Natural killer cell (primary cell): ENCODE measurements at regions of chr1 and their contacts with region 1.

Region 1: DNA sequence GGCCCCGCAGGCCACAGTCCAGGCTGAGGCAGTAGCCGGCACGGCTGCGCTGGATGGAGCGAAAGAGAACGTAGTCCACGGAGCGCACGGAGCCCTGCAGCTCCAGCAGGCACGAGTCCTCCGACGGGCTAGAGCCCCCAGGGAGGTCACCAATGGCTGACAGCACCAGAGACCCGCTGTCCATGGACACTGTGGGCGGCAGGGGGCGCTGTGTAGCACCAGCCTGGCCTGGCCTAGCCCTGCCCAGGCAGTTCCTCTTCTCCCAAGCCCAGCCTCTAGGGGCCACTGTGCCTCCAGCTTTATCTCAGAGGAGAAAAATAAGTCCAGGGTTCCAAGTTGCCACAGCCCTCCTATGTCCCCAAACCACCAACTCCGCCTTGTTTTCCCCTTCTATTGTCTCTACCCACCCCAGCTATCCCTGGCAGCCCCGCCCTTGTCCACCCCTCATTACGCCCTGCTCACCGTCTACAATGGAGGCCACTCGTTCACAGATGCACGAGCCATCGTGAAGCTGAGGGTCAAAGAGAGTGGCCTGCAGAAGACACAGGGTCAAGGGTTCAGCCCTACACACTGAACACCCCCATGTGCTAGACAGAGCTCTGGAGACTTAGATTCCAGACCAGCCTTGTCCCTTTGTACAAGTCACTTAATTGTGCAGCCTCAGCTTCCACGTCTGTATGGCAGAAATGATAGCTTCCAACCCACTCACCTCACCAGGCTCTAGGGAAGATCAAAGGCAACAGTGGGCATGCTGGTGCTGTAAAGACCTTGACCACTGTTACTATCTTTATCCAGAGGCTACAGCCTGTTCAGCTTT is 4.4 kb downstream of the ENTREP3 start:
- DNase-seq: peak; percentile 96 to 97
- ATAC-seq: peak; percentile 98 to 100 (median 98)
- H3K4me3 ChIP-seq: peak overlapping the region; percentile 46
- H3K4me3 Mint-ChIP-seq: peak overlapping the region; percentile 63
- H3K27ac ChIP-seq: no peak overlapping the region
- H3K27ac Mint-ChIP-seq: peak overlapping the region in 1 of 2 donors; percentile 58
- H3K4me1 ChIP-seq: peaks cover 31% of the 10 kb centered on the region
- H3K4me1 Mint-ChIP-seq: peaks cover 18 to 33% of the 10 kb centered on the region in 2 donors
- H3K27me3 ChIP-seq: no peaks in the 10 kb centered on the region
- H3K27me3 Mint-ChIP-seq: no peaks in the 10 kb centered on the region
- CTCF ChIP-seq: peak; percentile 100

Region 2: GRCh38 chr1:155273343-155274245 is 22.8 kb after region 1 on chr1 and contains the start of gene CLK2:
- intact Hi-C with region 1: loop called (anchors 2 kb)
- DNase-seq: peak; percentile 91 to 96
- ATAC-seq: peak; percentile 87 to 96 (median 89)
- H3K4me3 ChIP-seq: peak within 1 kb of the TSS; percentile 53
- H3K4me3 Mint-ChIP-seq: peak within 1 kb of the TSS; percentile 92
- H3K27ac ChIP-seq: peak within 1 kb of the TSS; percentile 71
- H3K27ac Mint-ChIP-seq: peak within 1 kb of the TSS; percentile 85 to 98
- H3K4me1 ChIP-seq: peaks cover 39% of the 10 kb centered on the region
- H3K4me1 Mint-ChIP-seq: peaks cover 46 to 48% of the 10 kb centered on the region in 2 donors
- H3K27me3 ChIP-seq: no peaks in the 10 kb centered on the region
- H3K27me3 Mint-ChIP-seq: no peaks in the 10 kb centered on the region
- CTCF ChIP-seq: no peak
- total RNA-seq, gene CLK2: 70.4 to 97.5 (median 84.4) TPM

Region 3: DNA sequence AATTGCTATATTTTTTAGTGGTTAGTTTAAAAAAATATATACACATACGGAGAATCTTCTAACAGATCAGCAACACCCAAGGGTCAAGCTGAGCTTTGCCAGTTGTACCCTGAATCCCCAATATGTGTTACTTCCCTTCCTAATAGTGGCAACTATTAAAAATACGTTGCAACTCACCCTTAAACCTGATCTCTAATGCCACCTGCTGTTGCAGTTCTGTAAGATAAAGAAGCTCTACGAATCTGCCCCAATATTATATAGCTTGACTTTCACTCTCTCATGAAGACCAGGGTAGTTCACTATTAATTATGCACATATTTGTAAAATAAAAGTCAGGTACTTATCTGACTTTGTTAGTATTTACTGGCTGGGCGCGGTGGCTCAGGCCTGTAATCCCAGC is 253.4 kb after region 1 on chr1:
- intact Hi-C with region 1: loop called (anchors 10 kb)
- DNase-seq: peak in 1 of 2 donors; percentile 57
- ATAC-seq: peak in 2 of 3 donors; percentile 40 to 63
- H3K4me3 ChIP-seq: no peak overlapping the region
- H3K4me3 Mint-ChIP-seq: no peak overlapping the region
- H3K27ac ChIP-seq: no peak overlapping the region
- H3K27ac Mint-ChIP-seq: peak overlapping the region in 1 of 2 donors; percentile 13
- H3K4me1 ChIP-seq: peaks cover 7% of the 10 kb centered on the region
- H3K4me1 Mint-ChIP-seq: peaks cover 29% of the 10 kb centered on the region in 2 donors
- H3K27me3 ChIP-seq: no peaks in the 10 kb centered on the region
- H3K27me3 Mint-ChIP-seq: no peaks in the 10 kb centered on the region
- CTCF ChIP-seq: no peak

Region 4: GRCh38 chr1:155591770-155592169 is 340.9 kb after region 1 on chr1:
- intact Hi-C with region 1: loop called (anchors 1 kb)
- DNase-seq: peak in 1 of 2 donors; percentile 80
- ATAC-seq: peak; percentile 68 to 83 (median 73)
- H3K4me3 ChIP-seq: no peak overlapping the region
- H3K4me3 Mint-ChIP-seq: no peak overlapping the region
- H3K27ac ChIP-seq: no peak overlapping the region
- H3K27ac Mint-ChIP-seq: no peak overlapping the region
- H3K4me1 ChIP-seq: no peaks in the 10 kb centered on the region
- H3K4me1 Mint-ChIP-seq: peaks cover 0 to 4% of the 10 kb centered on the region in 2 donors
- H3K27me3 ChIP-seq: no peaks in the 10 kb centered on the region
- H3K27me3 Mint-ChIP-seq: no peaks in the 10 kb centered on the region
- CTCF ChIP-seq: peak; percentile 68